ENCODE measurements at regions of chr12 and their contacts with region 1.

Region 1: DNA sequence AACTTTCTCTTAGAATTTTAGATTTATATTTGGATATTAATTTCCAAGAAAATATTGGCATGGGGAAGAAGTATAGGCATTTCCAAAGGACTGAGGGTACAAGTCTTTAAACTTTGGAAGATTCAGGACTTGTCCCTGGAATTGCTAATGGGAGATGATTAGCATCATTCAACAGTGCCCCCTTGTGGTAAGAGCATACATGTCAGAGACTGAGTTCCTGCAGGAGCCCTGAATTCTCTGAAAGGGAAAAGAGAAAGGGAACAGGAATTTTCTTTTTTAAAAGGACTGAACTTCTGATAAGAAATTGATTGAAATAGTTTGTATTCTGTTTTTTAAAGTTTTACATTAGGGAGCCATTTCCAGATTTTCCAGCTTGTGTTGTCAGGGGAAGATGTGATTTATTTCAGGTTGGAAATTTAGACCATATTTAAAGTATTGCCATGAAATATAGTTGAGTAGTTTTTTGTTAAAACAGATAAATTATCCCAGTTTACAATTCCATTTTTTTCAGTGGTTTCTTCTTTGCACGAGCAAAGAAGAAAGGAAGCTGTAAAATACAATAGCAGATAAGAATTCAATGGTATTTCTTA is 44.0 kb upstream of the REP15 start:
- DNase-seq: no peak
- H3K4me3 Mint-ChIP-seq: no peak overlapping the region
- H3K27ac Mint-ChIP-seq: no peak overlapping the region
- H3K4me1 Mint-ChIP-seq: peaks cover 16% of the 10 kb centered on the region
- H3K27me3 Mint-ChIP-seq: no peaks in the 10 kb centered on the region

Region 2: GRCh38 chr12:27703710-27704452 is 51.6 kb after region 1 on chr12:
- intact Hi-C with region 1: loop called (anchors 5 kb)
- DNase-seq: peak; percentile 49
- H3K4me3 Mint-ChIP-seq: no peak overlapping the region
- H3K27ac Mint-ChIP-seq: no peak overlapping the region
- H3K4me1 Mint-ChIP-seq: no peaks in the 10 kb centered on the region
- H3K27me3 Mint-ChIP-seq: peaks cover 20% of the 10 kb centered on the region